ENCODE measurements at regions of chr19 and their contacts with region 1.

Region 1: DNA sequence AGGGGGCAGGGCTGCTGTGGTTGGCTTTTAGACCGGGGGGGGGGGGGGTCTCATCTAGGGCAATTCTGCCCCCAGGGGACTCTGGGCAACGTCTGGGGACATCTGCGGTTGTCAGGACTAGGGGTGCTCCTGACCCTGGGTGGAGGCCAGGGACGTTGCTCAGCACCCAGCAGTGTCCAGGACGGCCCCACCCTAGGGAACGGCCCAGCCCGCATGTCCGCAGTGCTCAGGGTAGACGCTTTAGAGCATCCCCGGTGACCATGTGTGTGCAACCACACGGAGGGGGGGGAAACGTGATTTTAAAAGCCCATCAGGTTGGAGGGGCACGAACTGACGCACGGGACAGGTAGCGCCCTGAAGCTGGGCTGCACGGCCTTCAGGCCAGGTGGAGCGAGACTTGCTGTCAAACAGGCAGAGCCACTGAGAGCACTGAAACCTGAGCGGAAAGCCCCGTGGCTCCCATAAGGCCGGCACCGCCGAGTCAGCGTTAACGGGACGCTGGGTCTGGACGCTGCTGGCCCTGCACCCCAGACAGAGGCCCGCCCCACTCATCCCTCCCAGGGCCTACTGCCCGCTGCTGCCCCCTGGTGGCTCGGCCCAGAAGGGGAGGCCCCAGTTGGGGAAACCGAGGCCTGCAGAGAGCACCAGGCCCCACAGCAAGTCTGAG is 8.3 kb downstream of the CACTIN start:
- DNase-seq: peak; percentile 98
- H3K4me3 ChIP-seq: no peak overlapping the region; a peak in 1 of 4 replicates
- H3K27ac ChIP-seq: no peak overlapping the region
- H3K4me1 ChIP-seq: peaks cover 0 to 3% of the 10 kb centered on the region in 2 experiments; a peak in 1 of 4 replicates
- H3K27me3 ChIP-seq: no peaks in the 10 kb centered on the region
- CTCF ChIP-seq: peak; percentile 88
- EP300 ChIP-seq: no peak
- RAD21 ChIP-seq: peak; percentile 70

Region 2: DNA sequence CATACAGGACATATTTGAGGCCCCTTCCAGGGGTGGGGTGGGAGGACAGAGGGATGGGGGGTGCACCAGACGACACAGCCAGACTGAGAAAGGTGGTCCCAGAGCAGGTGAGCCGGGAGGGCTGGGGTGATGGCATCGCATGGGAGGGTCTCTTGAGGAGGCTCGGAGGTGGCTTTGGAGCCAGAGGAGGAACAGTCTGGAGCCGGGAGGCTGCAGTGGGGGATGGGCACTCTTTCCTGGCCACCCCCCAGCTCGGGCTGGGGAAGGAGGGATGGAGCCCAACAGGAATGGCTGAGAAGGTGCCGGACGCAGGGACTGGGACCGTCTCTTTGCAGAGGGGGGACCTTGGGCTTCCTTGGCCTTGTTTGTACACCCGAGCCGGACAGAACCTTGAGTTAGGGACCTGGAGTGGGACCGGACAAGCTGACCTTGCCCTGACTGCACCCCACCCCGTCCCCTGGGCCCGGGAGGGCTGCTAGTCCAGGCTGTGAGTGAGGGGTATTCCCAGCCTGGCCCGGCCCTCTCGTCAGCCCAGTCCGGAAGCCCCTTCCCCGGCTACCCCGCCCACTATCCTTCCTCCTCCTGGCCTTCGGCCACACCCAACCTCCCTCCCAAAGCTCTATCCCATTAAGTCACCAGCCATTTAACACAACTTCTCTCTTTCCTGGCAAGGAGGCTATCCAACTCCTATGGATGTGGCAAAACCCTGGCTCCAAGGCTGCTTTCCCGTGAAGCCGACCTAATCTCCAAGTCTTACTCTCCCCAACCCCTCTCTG is 10.8 kb before region 1 on chr19:
- CTCF ChIA-PET with region 1: interaction called, 23 read pairs
- POLR2A ChIA-PET with region 1: no interaction called
- DNase-seq: peak; percentile 71
- H3K4me3 ChIP-seq: peak overlapping the region; percentile 52 to 73
- H3K27ac ChIP-seq: peak overlapping the region; percentile 33 to 36; a peak in 2 of 4 replicates
- H3K4me1 ChIP-seq: peaks cover 8 to 14% of the 10 kb centered on the region in 2 experiments; a peak in 1 of 4 replicates
- H3K27me3 ChIP-seq: no peaks in the 10 kb centered on the region
- CTCF ChIP-seq: no peak
- EP300 ChIP-seq: no peak
- RAD21 ChIP-seq: no peak

Region 3: DNA sequence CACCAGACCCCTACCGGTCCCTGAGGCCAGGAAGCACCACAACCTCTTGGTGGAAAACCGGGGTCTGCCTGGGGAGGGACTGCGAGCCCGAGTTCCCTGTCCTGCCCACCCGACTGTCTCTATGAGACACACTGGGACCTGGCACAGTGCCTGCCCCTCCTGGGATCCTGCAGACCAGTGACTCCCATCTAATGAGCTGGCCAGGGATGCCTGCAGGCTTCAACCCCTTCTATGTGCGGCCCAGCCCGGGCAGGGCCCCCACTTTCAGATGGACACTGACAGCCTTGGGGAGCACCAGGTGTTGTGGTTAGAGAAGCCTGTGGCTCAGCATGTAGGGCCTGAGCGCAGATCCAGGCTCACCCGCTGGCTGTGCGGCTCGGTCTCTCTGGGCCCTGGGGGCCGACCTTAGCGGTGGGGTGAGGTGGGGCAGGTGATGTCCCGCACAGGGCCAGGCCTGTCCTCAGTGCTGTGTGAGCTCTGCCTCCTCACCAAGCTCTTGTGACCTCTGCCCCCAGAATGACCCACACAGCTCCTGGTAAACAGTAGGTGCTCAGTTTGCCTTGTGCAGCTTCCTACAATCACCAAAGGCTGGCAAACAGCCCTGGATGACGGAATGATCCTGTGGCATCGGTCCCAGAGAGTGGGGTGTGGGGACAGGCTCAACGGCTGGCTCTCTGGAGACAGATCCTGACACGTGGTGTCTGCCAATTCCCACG is 26.2 kb after region 1 on chr19:
- CTCF ChIA-PET with region 1: no interaction called
- POLR2A ChIA-PET with region 1: no interaction called
- DNase-seq: no peak
- H3K4me3 ChIP-seq: no peak overlapping the region
- H3K27ac ChIP-seq: no peak overlapping the region
- H3K4me1 ChIP-seq: no peaks in the 10 kb centered on the region
- H3K27me3 ChIP-seq: no peaks in the 10 kb centered on the region
- CTCF ChIP-seq: no peak
- EP300 ChIP-seq: no peak
- RAD21 ChIP-seq: no peak

Measured in SK-N-SH (cell line).